Vagina (tissue), 2 donors: ENCODE measurements at regions of chr21 and their contacts with region 1.

Region 1: DNA sequence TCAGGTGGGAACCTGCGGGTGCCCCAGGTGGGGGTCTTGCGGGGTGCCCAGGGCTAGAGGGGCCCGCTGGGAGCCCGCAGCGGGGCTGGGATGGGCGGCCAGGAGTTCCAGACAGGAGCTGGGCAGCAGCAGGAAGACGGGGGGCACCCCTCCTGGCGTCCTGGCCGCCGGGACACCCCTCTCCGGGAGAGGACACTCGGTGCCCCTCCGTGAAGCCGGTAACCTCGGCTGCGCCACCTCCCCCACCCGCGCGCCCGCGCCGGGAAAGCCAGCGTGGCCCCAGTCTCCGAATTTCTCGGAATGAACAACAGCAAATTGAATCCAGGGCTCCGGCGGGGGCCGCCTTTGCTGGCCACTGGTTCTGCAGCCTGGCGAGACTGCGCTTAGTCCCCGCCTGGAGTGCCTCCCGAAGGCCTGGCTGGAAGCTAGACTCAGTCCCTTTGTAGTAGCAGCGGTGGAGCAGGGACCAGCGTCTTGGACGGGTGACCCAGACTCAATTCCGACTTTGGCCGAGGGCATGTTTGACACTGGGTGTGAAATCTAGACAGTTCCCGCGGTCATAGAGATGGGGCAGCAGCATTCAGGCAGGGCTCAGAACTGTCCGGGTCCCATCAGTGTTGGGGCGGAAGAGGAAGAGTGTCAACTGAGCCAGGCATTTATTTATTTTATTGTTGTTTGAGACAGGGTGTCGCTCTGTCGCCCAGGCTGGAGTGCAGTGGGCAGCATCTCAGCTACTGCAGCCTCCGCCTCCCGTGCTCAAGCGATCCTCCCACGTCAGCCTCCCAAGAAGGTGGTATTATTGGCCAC is 769 bp downstream of the IFNGR2 start:
- DNase-seq: no peak
- H3K4me3 ChIP-seq: peak overlapping the region; percentile 76
- H3K27ac ChIP-seq: peak overlapping the region; percentile 94
- H3K4me1 ChIP-seq: peaks cover 48% of the 10 kb centered on the region
- H3K27me3 ChIP-seq: no peaks in the 10 kb centered on the region
- CTCF ChIP-seq: no peak
- POLR2A ChIP-seq: no peak

Region 2: DNA sequence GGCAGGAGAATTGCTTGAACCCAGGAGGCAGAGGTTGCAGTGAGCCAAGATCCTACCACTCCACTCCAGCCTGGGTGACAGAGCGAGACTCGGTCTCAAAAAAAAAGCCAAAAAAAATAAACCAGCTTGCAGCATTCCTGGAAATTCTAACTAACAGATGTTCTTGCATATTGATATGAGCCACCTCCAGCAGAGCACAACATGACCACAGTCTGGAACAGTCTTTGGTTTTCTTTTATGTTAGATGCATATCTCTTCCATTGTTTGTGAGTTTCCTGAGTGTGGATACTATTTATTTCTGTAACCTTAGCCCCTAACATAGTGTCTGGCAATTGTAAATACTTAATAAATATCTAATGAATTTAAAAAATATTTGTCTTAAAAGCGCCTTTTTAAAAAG is 55.3 kb before region 1 on chr21:
- intact Hi-C with region 1: no loop called
- DNase-seq: no peak
- H3K4me3 ChIP-seq: no peak overlapping the region
- H3K27ac ChIP-seq: no peak overlapping the region
- H3K4me1 ChIP-seq: no peaks in the 10 kb centered on the region
- H3K27me3 ChIP-seq: no peaks in the 10 kb centered on the region
- CTCF ChIP-seq: no peak
- POLR2A ChIP-seq: no peak

Region 3: GRCh38 chr21:33419538-33420123 is 15.6 kb after region 1 on chr21:
- intact Hi-C with region 1: loop called (anchors 2 kb)
- DNase-seq: no peak
- H3K4me3 ChIP-seq: no peak overlapping the region
- H3K27ac ChIP-seq: peak overlapping the region; percentile 37
- H3K4me1 ChIP-seq: peaks cover 28% of the 10 kb centered on the region
- H3K27me3 ChIP-seq: no peaks in the 10 kb centered on the region
- CTCF ChIP-seq: no peak
- POLR2A ChIP-seq: no peak

Region 4: GRCh38 chr21:33491373-33492102 is 87.6 kb after region 1 on chr21 and contains the start of gene DNAJC28:
- intact Hi-C with region 1: no loop called
- DNase-seq: peak in 1 of 2 donors; percentile 91
- H3K4me3 ChIP-seq: peak within 1 kb of the TSS; percentile 52 to 58
- H3K27ac ChIP-seq: peak within 1 kb of the TSS; percentile 61
- H3K4me1 ChIP-seq: no peaks in the 10 kb centered on the region
- H3K27me3 ChIP-seq: no peaks in the 10 kb centered on the region
- CTCF ChIP-seq: no peak
- POLR2A ChIP-seq: peak in 1 of 2 donors; percentile 11
- total RNA-seq, gene DNAJC28: 1.5 TPM